PC-3 (cell line): ENCODE measurements at regions of chr5 and their contacts with region 1.

Region 1: DNA sequence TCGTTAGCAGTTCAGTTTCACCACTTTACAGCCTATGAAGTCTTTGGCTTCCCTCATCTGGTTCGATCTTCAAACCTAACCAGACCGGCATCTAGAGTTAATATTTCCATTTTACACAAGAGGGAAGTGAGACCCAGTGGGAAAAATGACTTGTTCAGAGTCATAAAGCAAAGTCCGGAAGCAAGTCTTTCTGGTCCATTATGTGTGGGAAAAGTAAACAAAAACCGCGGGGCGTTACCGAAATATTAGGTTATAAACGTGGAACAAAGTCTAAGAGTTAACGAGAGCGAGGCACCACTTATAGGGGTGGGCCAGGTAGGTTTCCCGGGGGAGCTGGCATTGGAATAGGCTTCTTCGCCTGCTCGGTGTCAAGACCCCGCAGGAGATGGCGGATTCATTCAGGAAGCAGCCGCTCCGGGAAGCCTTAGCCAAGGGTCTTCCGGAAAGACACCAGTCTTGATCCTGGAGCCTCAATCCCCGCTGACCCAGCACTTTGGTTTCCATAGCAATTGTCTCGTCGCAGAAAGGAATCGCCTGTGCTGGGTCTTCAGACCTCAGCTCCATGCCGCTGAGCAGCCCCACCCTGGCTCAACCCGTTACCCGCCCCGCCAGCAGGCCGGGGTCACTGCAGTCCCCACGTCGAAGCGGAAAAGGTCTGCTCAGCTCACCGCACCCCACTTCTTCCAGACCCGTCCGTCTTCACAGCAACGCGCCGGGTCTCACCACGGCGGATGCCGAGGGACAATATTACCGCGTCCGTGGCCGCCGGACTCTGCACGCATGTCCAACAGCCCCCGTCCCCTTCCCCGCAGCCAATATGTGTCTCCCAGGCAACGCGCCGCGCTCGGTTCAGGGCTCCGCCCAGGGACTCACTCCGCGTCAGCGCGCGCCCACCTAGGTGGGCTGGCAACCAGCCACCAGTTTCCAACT is at the start of gene C5orf52:
- DNase-seq: peak; percentile 96
- ATAC-seq: peak; percentile 58
- H3K4me3 ChIP-seq: peak within 1 kb of the TSS; percentile 64
- H3K27ac ChIP-seq: peak within 1 kb of the TSS; percentile 91
- H3K4me1 ChIP-seq: peaks cover 29% of the 10 kb centered on the region
- H3K27me3 ChIP-seq: no peaks in the 10 kb centered on the region
- CTCF ChIP-seq: no peak
- total RNA-seq, gene C5orf52: 0.84 TPM in 1 of 2 replicates, not detected in the other

Region 2: DNA sequence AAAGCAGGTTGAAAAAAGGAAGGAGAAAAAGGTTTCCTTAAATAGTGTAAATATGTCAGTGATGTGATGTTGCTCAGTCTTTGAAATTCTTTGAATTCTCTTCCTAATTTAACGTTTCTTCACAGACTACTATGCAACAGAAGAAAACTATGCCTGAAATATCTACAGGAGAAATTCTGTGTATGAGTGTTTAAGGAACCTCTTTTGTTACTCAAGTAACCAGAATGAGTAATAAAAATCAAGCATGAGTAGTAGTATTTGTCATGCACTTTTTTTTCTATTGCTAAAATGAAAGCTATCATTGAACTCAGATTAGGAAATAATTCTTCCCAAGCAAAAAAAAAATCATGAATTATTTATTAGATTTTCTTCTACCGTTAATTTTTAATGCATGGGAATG is 39.9 kb after region 1 on chr5:
- CTCF ChIA-PET with region 1: no interaction called
- POLR2A ChIA-PET with region 1: no interaction called
- intact Hi-C with region 1: loop called (anchors 2 kb)
- DNase-seq: peak; percentile 84
- ATAC-seq: peak; percentile 87
- H3K4me3 ChIP-seq: no peak overlapping the region
- H3K27ac ChIP-seq: peak overlapping the region; percentile 65
- H3K4me1 ChIP-seq: peaks cover 22% of the 10 kb centered on the region
- H3K27me3 ChIP-seq: no peaks in the 10 kb centered on the region
- CTCF ChIP-seq: no peak